PC-9 (cell line): ENCODE measurements at regions of chr14 and their contacts with region 1.

Region 1: DNA sequence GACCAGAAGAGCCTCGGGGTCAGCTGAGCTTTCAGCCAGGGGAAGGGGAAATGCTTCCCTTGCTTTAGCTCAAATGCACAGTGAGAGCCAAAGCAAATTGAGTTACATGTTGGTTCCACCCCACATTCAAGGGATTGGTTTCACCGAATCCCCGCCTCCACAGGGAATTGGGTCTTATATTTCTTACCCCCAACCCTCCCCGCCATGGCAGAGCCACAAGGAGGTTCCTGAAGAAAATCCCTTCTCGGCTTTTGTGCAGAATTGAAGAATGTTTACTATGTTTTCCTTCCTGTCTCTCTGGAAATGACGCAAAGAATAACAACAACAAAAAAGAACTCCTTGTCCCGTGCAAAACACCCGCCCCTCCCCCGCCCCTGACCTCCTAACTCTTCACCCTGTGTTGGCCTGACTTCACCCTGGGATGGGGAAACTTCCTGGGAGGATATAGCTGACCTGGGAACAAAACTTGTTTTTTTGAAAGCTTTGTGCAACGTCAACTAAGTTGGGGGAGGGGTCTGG is 21.9 kb upstream of the CIPC start:
- DNase-seq: no peak
- H3K4me3 ChIP-seq: no peak overlapping the region
- H3K27ac ChIP-seq: no peak overlapping the region
- H3K4me1 ChIP-seq: peaks cover 35% of the 10 kb centered on the region
- H3K27me3 ChIP-seq: no peaks in the 10 kb centered on the region
- CTCF ChIP-seq: no peak

Region 2: DNA sequence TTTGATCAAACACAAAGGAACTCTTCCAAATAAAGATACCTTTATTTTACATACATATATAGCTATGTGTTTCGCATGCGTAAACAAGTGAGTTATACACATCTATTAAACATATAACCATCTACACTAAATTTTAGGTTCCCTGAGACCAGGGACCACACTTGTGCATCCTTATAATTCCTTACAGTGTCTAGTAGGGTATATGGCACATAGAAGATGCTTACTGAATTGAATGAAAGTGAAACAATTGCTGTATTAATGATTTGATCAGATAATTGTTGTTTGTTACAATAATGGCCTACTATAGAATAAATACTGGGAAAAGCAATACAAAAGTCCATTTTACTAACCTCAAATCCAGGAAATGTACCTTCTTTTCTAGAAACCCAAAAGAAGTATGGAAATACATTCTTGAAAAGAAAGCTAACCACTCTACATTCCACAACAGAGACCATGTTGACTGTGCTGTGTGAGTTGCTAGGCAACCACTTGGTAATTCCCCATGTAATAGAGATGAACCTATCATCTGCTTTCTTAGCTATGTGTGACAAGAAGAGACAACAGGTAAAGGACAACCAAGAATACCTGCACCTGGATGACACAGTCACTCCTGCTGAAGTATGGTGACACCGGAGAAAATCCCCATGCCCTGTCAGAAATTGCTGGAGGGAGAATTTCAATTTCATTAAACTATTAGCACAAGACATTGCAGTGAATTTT is 10.0 kb after region 1 on chr14:
- CTCF ChIA-PET with region 1: interaction called, 40 read pairs
- POLR2A ChIA-PET with region 1: interaction called, 3 read pairs
- intact Hi-C with region 1: loop called (anchors 1 kb)
- DNase-seq: peak; percentile 58 to 86
- H3K4me3 ChIP-seq: no peak overlapping the region
- H3K27ac ChIP-seq: no peak overlapping the region
- H3K4me1 ChIP-seq: peaks cover 38% of the 10 kb centered on the region
- H3K27me3 ChIP-seq: no peaks in the 10 kb centered on the region
- CTCF ChIP-seq: no peak

Region 3: GRCh38 chr14:77105145-77105939 is 29.2 kb after region 1 on chr14:
- CTCF ChIA-PET with region 1: no interaction called
- POLR2A ChIA-PET with region 1: no interaction called
- intact Hi-C with region 1: no loop called
- DNase-seq: no peak
- H3K4me3 ChIP-seq: no peak overlapping the region
- H3K27ac ChIP-seq: no peak overlapping the region
- H3K4me1 ChIP-seq: no peaks in the 10 kb centered on the region
- H3K27me3 ChIP-seq: no peaks in the 10 kb centered on the region
- CTCF ChIP-seq: no peak

Region 4: GRCh38 chr14:77212943-77213678 is 136.9 kb after region 1 on chr14:
- CTCF ChIA-PET with region 1: no interaction called
- POLR2A ChIA-PET with region 1: interaction called, 3 read pairs
- intact Hi-C with region 1: loop called (anchors 1 kb)
- DNase-seq: peak; percentile 55 to 82
- H3K4me3 ChIP-seq: no peak overlapping the region
- H3K27ac ChIP-seq: no peak overlapping the region
- H3K4me1 ChIP-seq: no peaks in the 10 kb centered on the region
- H3K27me3 ChIP-seq: peaks cover 71% of the 10 kb centered on the region
- CTCF ChIP-seq: peak; percentile 90

Region 5: GRCh38 chr14:77580964-77581505 is 504.9 kb after region 1 on chr14:
- CTCF ChIA-PET with region 1: no interaction called
- POLR2A ChIA-PET with region 1: no interaction called
- intact Hi-C with region 1: no loop called
- DNase-seq: peak in 1 of 2 experiments; percentile 73
- H3K4me3 ChIP-seq: no peak overlapping the region
- H3K27ac ChIP-seq: peak overlapping the region; percentile 48
- H3K4me1 ChIP-seq: no peaks in the 10 kb centered on the region; the same call in 1 of the 2 replicates
- H3K27me3 ChIP-seq: no peaks in the 10 kb centered on the region
- CTCF ChIP-seq: no peak